GM13977 (cell line): ENCODE measurements at regions of chr6 and their contacts with region 1.

Region 1: GRCh38 chr6:52419809-52420670 is at the start of gene EFHC1:
- DNase-seq: peak; percentile 93
- CTCF ChIP-seq: no peak

Region 2: DNA sequence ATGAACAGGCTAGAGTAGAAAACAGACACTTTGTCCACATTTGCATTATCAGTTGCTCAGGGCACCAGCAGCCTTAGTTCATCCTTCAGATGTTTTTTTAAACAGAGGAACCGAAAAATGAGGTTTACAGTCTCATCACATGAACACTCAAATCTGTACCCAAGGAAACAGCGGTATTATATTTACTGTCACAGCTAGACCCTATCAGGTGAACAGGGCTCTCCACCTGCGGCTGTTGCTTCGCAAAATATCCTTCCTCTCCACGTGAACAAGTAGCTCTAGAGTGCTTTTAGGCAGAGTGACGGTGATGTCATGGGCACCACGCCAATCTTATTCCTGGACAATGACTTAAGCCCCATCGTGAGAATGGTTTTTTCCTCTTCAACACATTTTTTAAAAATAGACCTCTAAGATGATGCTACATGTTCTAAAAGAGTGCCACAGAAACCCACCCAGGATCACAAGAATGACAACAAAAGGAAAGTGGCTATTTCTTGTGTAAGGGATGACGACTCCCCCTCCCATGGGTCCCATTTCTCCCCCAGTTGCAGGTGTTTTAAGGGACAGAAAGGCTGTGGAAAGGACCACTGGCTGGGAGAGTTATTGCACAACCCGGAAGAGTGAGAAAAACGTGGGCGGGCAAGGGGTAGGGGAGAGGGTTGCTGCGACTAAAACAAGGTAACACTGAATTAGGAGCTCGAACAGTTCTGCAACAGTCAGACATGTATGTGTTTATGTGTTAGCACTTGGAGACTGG is 77.8 kb after region 1 on chr6:
- in situ Hi-C with region 1: loop called (anchors 10 kb)
- DNase-seq: peak; percentile 63
- CTCF ChIP-seq: no peak

Region 3: GRCh38 chr6:52664186-52664990 is 244.3 kb after region 1 on chr6:
- in situ Hi-C with region 1: loop called (anchors 5 kb)
- DNase-seq: peak; percentile 96
- CTCF ChIP-seq: no peak